BJ (cell line): ENCODE measurements at regions of chr2 and their contacts with region 1.

Region 1: DNA sequence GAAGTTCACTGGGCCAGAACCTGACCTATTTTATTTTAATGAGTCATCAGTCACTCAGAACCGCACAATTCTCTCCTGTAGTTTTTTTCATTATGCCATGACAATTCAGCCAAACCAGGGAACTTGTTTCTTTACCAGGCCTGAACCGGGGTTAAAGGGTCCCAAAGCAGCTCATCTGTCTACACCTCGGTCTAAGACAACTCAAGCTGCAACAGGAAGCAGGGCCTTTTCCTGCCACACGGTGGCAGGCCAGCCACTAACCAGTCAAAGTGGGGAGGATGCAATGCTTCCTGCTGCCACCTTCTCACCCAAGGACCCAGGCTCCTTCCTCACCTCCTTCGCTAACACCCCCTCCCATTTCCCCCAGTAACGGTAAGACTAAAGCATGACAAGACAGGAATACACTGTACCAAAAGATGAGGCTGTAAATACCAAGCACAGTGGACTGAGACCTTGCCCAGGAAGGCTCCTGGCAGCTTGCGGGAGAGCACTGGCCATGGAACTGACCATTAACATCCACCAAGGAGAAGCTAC is 56.7 kb upstream of the ACKR3 start:
- DNase-seq: no peak
- H3K4me3 ChIP-seq: no peak overlapping the region
- H3K27me3 ChIP-seq: no peaks in the 10 kb centered on the region; the same call in 1 of the 2 replicates
- CTCF ChIP-seq: peak; percentile 87

Region 2: DNA sequence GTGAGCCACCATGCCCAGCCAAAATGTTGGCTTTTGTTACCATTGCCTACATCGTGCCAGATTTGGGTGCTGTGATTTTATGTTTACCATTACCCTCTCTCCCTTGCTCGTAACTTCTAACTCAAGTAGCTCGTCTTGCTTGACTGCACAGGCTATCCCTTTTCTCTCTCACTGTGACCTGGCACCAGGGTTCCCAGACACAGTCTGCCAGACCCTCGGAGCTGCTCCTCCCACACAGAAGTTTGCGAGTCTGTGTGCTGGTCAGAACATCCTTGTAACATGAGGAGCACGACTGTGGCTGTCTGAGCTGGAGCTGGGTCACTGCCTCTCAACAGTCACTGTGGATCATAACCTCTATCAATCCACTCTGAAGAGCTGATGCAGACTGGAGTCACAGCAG is 95.8 kb before region 1 on chr2:
- CTCF ChIA-PET with region 1: no interaction called
- POLR2A ChIA-PET with region 1: no interaction called
- DNase-seq: no peak
- H3K4me3 ChIP-seq: no peak overlapping the region
- H3K27me3 ChIP-seq: no peaks in the 10 kb centered on the region
- CTCF ChIP-seq: no peak

Region 3: GRCh38 chr2:236498369-236498768 is 14.6 kb before region 1 on chr2:
- CTCF ChIA-PET with region 1: interaction called, 17 read pairs
- POLR2A ChIA-PET with region 1: no interaction called
- DNase-seq: peak; percentile 35
- H3K4me3 ChIP-seq: no peak overlapping the region
- H3K27me3 ChIP-seq: no peaks in the 10 kb centered on the region
- CTCF ChIP-seq: no peak

Region 4: DNA sequence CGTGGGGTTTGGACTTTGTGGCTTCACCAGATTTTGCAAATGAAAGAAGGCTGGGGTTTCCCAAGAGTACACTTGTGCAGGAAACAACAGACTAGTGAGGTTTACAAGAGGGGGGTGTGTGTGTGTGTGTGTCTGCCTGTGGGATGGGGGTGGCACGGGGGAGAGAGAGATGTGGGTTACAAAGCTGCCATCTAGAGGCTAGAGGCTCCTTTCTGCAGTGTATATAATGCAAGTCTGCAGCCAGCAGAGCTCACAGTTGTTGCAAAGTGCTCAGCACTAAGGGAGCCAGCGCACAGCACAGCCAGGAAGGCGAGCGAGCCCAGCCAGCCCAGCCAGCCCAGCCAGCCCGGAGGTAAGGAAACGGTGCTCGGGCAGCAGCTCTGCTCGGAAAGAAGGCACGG is 56.6 kb after region 1 on chr2 and contains the start of gene ACKR3:
- CTCF ChIA-PET with region 1: interaction called, 50 read pairs
- POLR2A ChIA-PET with region 1: no interaction called
- DNase-seq: peak; percentile 68
- H3K4me3 ChIP-seq: peak within 1 kb of the TSS; percentile 37
- H3K27me3 ChIP-seq: peaks cover 22% of the 10 kb centered on the region
- CTCF ChIP-seq: peak; percentile 56
- polyA plus RNA-seq, gene ACKR3: 4.6 and 6.6 TPM in 2 replicates

Region 5: GRCh38 chr2:237026981-237027711 is 514.2 kb after region 1 on chr2:
- CTCF ChIA-PET with region 1: interaction called, 47 read pairs
- POLR2A ChIA-PET with region 1: no interaction called
- DNase-seq: no peak
- H3K4me3 ChIP-seq: no peak overlapping the region
- H3K27me3 ChIP-seq: no peaks in the 10 kb centered on the region; the same call in 1 of the 2 replicates
- CTCF ChIP-seq: peak; percentile 90

Region 6: DNA sequence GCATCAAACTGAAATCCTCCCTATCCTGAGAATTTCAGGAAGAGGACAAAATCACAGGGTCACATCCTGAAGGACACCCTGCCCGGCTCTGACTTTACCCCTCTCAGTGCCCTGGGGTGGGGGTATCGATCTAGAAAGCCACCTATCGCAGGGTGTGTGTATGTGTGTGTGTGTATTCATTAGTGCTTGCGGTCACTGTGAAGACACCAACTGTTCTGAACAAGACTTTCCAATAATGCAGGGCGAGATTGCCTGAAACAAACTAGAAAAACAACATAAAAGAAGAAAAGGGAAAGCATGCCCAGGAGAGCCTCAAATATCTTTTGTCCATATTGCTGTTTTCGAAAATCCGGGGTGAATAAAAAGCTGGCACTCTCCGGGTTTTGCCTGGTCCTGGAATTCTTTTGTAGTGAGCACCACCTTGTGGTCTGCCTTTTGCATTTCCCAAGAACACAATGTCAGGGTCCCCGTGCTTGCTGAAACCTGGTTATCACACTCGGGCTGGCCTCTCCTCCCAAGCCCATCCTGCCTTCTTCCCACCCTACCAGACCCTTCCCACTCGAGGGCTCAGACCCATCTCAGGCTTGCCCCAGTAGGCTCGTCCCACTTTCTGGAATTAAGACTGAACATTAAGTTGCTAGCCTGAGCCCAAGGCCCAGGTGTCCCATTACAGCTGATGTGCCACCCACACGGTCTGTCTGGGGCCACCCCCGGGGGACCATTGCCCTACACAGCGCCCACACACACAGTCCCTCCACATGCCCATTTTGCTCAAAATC is 547.8 kb after region 1 on chr2:
- CTCF ChIA-PET with region 1: interaction called, 23 read pairs
- POLR2A ChIA-PET with region 1: no interaction called
- DNase-seq: peak; percentile 5
- H3K4me3 ChIP-seq: no peak overlapping the region
- H3K27me3 ChIP-seq: no peaks in the 10 kb centered on the region; the same call in 1 of the 2 replicates
- CTCF ChIP-seq: peak; percentile 72